GM10248 (cell line): ENCODE measurements at regions of chr22 and their contacts with region 1.

Region 1: GRCh38 chr22:24156913-24157821 is 24.1 kb upstream of the SUSD2 start:
- DNase-seq: peak; percentile 94
- CTCF ChIP-seq: peak; percentile 82

Region 2: GRCh38 chr22:24106385-24107381 is 50.5 kb before region 1 on chr22:
- CTCF ChIA-PET with region 1: interaction called, 18 read pairs
- POLR2A ChIA-PET with region 1: no interaction called
- DNase-seq: peak; percentile 38
- CTCF ChIP-seq: peak; percentile 36

Region 3: DNA sequence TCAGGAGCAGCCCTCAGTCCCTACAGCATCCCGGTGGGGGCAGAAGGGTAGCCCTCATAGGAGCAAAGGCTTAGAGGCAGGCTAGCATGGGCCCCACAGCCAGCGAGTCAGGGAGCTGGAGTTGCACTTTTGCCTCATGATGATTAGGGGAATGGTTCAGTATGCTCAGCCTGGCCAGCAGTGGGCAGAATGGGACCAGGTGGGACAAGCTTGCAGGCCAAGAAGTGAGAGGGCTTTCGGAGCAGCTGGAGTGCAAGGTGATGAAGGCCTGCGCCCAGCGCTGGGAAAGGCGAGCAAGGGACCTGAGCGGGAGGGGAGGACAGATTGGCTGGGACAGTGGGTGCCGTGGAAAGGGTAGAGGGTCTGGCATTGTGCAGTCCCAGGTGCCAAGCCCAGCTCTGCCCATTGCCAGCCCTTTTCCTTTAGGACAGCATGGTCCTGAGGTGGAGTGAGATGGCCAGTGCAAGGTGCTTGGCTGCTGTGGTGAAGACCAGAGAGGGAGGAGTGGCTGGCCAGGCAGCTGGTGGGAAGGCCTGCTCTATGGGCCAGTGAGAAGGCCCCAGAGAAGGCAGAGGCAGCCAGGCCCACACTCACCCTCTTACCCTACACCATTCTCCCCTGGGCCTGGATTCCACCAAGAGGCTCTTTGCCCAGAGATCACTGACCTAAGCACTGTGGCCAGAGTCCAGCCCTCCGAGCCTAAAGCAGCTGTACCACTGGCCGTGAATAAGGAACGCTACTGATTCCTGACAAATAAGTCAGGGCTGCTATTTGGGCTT is 23.8 kb before region 1 on chr22:
- CTCF ChIA-PET with region 1: interaction called, 15 read pairs
- POLR2A ChIA-PET with region 1: no interaction called
- DNase-seq: no peak
- CTCF ChIP-seq: peak; percentile 43

Region 4: GRCh38 chr22:24146194-24146616 is 11.0 kb before region 1 on chr22:
- CTCF ChIA-PET with region 1: interaction called, 74 read pairs
- POLR2A ChIA-PET with region 1: no interaction called
- DNase-seq: peak; percentile 83
- CTCF ChIP-seq: no peak

Region 5: GRCh38 chr22:24175160-24175808 is 18.1 kb after region 1 on chr22:
- CTCF ChIA-PET with region 1: interaction called, 82 read pairs
- POLR2A ChIA-PET with region 1: no interaction called
- DNase-seq: peak; percentile 77
- CTCF ChIP-seq: peak; percentile 85